ENCODE measurements at regions of chr12 and their contacts with region 1.

Region 1: DNA sequence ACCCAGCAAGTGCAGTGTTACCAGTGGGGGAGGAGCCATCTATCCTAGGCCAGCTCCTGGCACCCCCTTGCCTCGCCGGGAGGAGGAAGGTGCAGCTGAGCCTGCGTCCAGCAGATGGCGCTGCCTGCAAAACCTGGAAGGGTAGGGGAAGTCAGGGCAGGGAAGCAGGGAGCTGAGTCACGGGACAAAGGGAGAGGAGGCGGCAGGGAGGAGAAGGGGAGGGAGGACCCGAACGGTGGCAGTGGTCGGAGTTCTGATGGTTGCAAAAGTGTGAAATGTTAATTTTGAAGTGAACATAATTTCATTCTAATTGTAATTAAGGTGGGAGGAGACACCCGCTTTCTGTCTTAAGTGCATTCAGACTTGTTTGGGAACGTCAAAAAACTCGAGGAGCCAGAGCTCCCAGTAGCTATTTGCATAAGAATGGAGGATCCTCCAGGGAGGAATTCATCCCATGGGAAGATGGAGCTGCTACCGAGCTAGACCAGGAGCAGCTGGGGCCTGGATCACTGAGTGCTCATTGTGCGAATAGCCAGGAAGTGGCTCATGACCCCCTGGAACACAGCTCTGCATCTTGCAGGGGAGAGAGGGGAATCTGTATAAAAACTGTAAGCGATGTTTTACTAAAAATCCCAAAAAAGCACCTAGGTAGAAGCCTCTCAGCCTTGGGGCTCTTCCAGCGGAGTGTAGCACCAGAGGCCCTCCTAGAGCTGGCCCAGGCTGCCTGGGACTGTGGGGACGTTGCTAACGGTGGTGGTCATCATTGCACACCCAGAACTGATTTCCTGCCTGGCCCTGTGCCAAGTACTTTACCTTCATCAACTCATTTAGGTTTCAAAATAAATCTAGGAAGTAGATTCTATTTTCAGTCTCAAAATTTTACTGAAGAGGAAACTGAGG is 59.5 kb downstream of the EMP1 start:
- DNase-seq: peak; percentile 90 to 99
- H3K4me3 ChIP-seq: peak overlapping the region; percentile 21 to 50 (median 30); a peak in 5 of 8 replicates
- H3K27ac ChIP-seq: peak overlapping the region; percentile 28
- H3K4me1 ChIP-seq: peaks cover 2 to 12% (median 7%) of the 10 kb centered on the region in 4 experiments; a peak in 6 of 7 replicates
- H3K27me3 ChIP-seq: no peaks in the 10 kb centered on the region
- CTCF ChIP-seq: peak; percentile 92 to 100 (median 99)
- EP300 ChIP-seq: 0 out of 3 replicates have a peak, but pooled peaks of 1 of the 2 experiments have one; percentile 28
- POLR2A ChIP-seq: peak in 1 of 2 experiments; percentile 65; a peak in 2 of 3 replicates
- RAD21 ChIP-seq: peak; percentile 91 to 93

Region 2: GRCh38 chr12:13175499-13175898 is 80.5 kb before region 1 on chr12:
- CTCF ChIA-PET with region 1: no interaction called
- POLR2A ChIA-PET with region 1: no interaction called
- DNase-seq: peak in 1 of 2 experiments; percentile 8
- H3K4me3 ChIP-seq: no peak overlapping the region
- H3K27ac ChIP-seq: no peak overlapping the region
- H3K4me1 ChIP-seq: peaks cover 6 to 21% (median 18%) of the 10 kb centered on the region in 4 experiments
- H3K27me3 ChIP-seq: no peaks in the 10 kb centered on the region; a peak in 1 of 7 replicates
- CTCF ChIP-seq: no peak
- EP300 ChIP-seq: no peak
- POLR2A ChIP-seq: no peak
- RAD21 ChIP-seq: no peak

Region 3: DNA sequence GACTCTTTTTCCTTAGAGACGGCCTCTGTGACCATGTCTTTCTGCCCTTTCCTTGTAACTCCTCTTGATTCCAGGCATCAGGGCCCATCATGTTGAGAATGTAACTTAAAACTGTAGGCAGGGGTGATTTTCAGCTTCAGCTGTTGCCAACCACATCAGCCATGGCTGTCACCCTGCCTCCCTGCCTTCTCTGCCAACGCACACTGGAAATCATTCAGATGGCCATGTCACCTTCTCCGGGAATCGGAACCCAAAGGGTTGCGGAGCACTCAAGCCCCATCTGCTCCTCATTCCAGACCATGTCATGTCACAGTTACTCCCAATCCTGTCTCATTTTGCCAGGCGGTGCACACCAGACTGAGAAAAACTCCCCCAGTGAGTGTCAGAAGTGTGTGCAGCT is 12.5 kb after region 1 on chr12:
- CTCF ChIA-PET with region 1: interaction called, 30 read pairs
- POLR2A ChIA-PET with region 1: interaction called, 4 read pairs
- DNase-seq: no peak
- H3K4me3 ChIP-seq: no peak overlapping the region
- H3K27ac ChIP-seq: no peak overlapping the region
- H3K4me1 ChIP-seq: no peaks in the 10 kb centered on the region
- H3K27me3 ChIP-seq: no peaks in the 10 kb centered on the region; a peak in 1 of 7 replicates
- CTCF ChIP-seq: no peak
- EP300 ChIP-seq: no peak
- POLR2A ChIP-seq: no peak
- RAD21 ChIP-seq: no peak

Region 4: GRCh38 chr12:13278249-13278787 is 22.3 kb after region 1 on chr12:
- CTCF ChIA-PET with region 1: interaction called, 30 read pairs
- POLR2A ChIA-PET with region 1: interaction called, 3 read pairs
- DNase-seq: peak; percentile 47 to 88
- H3K4me3 ChIP-seq: no peak overlapping the region
- H3K27ac ChIP-seq: no peak overlapping the region
- H3K4me1 ChIP-seq: peaks cover 0 to 12% (median 3%) of the 10 kb centered on the region in 4 experiments; a peak in 3 of 7 replicates
- H3K27me3 ChIP-seq: peaks cover 0 to 8% (median 4%) of the 10 kb centered on the region in 4 experiments; a peak in 5 of 7 replicates
- CTCF ChIP-seq: peak; percentile 82 to 92 (median 84)
- EP300 ChIP-seq: no peak
- POLR2A ChIP-seq: no peak
- RAD21 ChIP-seq: peak; percentile 86 to 89

Region 5: GRCh38 chr12:13661005-13661887 is 405.2 kb after region 1 on chr12:
- CTCF ChIA-PET with region 1: interaction called, 13 read pairs
- POLR2A ChIA-PET with region 1: no interaction called
- DNase-seq: peak; percentile 15 to 63
- H3K4me3 ChIP-seq: no peak overlapping the region
- H3K27ac ChIP-seq: no peak overlapping the region
- H3K4me1 ChIP-seq: no peaks in the 10 kb centered on the region
- H3K27me3 ChIP-seq: no peaks in the 10 kb centered on the region
- CTCF ChIP-seq: peak; percentile 63 to 85 (median 76)
- EP300 ChIP-seq: no peak
- POLR2A ChIP-seq: no peak
- RAD21 ChIP-seq: peak; percentile 66 to 80

Region 6: DNA sequence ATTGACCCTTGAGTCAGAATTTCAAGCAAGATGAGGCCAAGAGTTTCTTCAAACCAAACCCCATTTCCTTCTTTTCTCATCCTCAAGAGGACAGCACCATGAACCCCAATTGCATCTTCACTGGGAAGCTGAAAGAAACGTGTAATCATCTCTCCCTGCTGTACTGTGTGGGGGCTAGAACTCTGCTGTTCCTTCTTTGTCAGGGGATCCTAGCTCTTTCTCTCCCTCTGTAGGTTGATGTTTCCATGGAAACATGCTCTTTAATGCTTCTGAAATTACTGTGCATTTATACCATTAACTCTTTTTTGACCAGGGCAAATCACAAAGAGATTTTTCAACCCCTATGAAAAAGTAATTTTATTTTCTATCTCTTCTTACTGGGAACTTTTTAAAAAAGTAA is 430.2 kb after region 1 on chr12:
- CTCF ChIA-PET with region 1: no interaction called
- POLR2A ChIA-PET with region 1: no interaction called
- DNase-seq: no peak
- H3K4me3 ChIP-seq: no peak overlapping the region
- H3K27ac ChIP-seq: no peak overlapping the region
- H3K4me1 ChIP-seq: no peaks in the 10 kb centered on the region
- H3K27me3 ChIP-seq: no peaks in the 10 kb centered on the region
- CTCF ChIP-seq: no peak
- EP300 ChIP-seq: no peak
- POLR2A ChIP-seq: no peak
- RAD21 ChIP-seq: no peak